ENCODE measurements at regions of chr11 and their contacts with region 1.

Region 1: DNA sequence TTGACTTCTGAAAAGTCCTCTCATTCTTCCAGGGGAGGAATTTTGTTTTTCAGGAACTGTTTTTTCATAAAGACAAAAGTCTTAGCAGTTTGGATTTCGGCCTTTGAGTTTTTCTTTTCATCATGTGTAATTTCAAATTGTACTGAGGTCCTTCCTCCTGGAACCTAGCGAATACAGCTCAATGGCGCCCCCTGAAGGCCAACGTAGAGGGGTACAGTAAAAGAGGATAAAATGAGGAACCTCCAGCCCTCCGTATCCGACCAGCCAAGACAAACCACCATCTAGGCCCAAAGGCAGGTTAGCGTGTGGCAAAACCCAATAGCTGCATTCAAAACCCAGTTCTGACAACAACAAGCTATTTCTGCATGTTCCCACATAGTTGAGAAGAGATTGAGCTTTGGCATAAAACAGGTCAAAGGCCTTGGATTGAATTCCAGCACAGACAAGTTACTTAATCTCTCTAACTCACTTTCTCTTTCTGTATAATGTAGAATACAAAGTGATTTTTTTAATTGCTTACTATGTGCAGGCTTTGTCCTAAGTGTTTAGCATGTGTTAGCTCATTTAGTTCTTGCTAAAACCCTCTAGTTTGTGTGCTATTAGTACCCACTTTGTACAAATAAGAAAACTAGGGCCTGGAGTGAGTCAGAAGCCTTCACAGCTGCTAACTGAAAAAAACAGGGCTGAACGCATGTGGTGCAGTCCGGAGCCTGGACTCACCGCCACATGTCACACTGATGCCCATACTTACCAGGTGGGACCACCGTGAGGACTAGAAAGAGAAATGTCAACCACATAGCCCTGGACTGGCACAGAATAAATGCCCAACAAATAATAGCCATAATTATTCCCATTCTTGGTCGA is 43.2 kb upstream of the ETS1 start:
- DNase-seq: peak; percentile 89
- ATAC-seq: peak; percentile 87
- H3K4me3 ChIP-seq: peak overlapping the region; percentile 15; the same call in 1 of the 2 replicates
- H3K27ac ChIP-seq: peak overlapping the region; percentile 64
- H3K4me1 ChIP-seq: peaks cover 51% of the 10 kb centered on the region
- H3K27me3 ChIP-seq: no peaks in the 10 kb centered on the region
- CTCF ChIP-seq: peak; percentile 80 to 97 (median 82)
- EP300 ChIP-seq: no peak
- POLR2A ChIP-seq: no peak
- RAD21 ChIP-seq: peak; percentile 98

Region 2: DNA sequence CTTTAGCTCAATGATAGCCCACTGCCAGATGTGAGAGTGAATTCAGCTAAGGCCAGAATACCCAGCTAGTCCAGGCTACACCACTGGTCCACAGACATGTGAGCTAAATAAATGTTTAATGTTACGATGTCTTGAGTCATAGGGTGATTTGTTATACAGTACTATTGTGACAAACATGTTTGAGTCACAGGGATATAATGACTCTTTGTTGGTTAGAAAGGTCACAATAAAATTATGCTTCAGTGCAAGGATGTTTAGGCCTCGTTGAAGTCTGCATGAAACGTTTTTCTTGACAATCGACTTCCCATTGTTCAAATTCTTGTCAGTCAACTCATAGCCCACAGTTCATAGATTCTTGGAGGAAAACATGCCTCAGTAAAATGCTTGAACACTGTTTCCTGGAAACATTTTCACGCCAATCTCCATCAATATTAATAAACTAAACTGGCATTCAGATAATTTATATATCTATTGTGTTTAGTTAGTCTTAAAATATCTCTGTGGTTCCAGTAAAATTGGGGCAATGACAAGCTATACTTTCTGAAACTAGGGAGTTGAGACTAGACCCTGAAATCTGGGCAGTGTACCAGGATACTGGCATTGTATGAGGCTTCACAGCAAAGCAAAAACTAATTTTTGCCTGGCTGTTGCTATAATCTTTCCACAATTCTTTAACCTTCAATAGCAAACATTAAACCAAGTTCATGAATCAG is 979.3 kb before region 1 on chr11:
- CTCF ChIA-PET with region 1: no interaction called
- POLR2A ChIA-PET with region 1: no interaction called
- RAD21 ChIA-PET with region 1: no interaction called
- SMC1A ChIA-PET with region 1: no interaction called
- in situ Hi-C with region 1: no loop called
- intact Hi-C with region 1: no loop called
- DNase-seq: no peak
- ATAC-seq: no peak
- H3K4me3 ChIP-seq: no peak overlapping the region
- H3K27ac ChIP-seq: no peak overlapping the region
- H3K4me1 ChIP-seq: no peaks in the 10 kb centered on the region
- H3K27me3 ChIP-seq: no peaks in the 10 kb centered on the region; a peak in 1 of 4 replicates
- CTCF ChIP-seq: no peak
- EP300 ChIP-seq: no peak
- POLR2A ChIP-seq: no peak
- RAD21 ChIP-seq: no peak

Region 3: DNA sequence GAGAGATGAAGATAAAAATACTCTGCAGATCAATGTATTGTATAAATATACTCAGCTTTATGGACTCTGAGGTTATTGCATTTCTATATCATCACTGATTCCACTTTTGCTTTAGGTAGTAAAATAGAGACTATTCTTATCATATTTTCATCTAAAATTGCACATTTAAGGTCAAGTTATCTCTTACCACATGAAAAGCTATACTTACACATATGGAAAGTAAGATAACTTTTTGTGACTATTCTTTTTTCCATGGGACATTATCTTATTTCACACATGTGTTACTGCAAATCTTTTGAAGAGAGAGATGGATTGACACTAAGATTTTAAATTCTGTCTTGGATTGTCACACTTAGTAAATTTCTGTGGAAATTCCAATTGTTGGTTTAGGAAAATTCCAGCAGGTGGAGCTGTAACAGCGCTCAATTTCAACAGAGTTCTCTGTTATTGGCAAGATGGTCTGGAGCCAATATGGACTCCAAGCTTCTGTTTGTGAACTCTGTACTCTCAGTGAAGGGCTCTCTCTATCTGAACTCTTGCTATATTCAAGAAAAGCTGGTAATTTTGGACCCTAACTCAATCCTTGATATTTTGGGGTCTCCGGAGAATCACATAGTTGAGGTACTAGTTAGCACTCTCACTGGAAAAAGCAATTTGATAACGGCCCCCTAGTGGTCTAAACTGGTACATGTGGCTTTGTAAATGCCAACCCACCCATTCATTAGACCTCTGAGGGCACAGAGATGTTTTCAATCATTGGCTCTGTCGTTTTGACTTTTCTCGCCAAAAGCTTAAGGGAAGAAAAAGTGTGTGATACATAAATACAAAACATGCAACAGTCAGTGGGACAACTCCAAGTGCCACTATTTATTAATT is 472.9 kb before region 1 on chr11:
- CTCF ChIA-PET with region 1: interaction called, 68 read pairs
- POLR2A ChIA-PET with region 1: no interaction called
- RAD21 ChIA-PET with region 1: interaction called, 25 read pairs
- SMC1A ChIA-PET with region 1: interaction called, 28 read pairs
- in situ Hi-C with region 1: no loop called
- intact Hi-C with region 1: loop called (anchors 1 kb)
- DNase-seq: peak; percentile 51
- ATAC-seq: peak; percentile 94
- H3K4me3 ChIP-seq: no peak overlapping the region
- H3K27ac ChIP-seq: no peak overlapping the region
- H3K4me1 ChIP-seq: no peaks in the 10 kb centered on the region
- H3K27me3 ChIP-seq: peaks cover 2 to 3% of the 10 kb centered on the region in 2 experiments; a peak in 2 of 4 replicates
- CTCF ChIP-seq: peak; percentile 58 to 92 (median 73)
- EP300 ChIP-seq: no peak
- POLR2A ChIP-seq: no peak
- RAD21 ChIP-seq: peak; percentile 61

Region 4: DNA sequence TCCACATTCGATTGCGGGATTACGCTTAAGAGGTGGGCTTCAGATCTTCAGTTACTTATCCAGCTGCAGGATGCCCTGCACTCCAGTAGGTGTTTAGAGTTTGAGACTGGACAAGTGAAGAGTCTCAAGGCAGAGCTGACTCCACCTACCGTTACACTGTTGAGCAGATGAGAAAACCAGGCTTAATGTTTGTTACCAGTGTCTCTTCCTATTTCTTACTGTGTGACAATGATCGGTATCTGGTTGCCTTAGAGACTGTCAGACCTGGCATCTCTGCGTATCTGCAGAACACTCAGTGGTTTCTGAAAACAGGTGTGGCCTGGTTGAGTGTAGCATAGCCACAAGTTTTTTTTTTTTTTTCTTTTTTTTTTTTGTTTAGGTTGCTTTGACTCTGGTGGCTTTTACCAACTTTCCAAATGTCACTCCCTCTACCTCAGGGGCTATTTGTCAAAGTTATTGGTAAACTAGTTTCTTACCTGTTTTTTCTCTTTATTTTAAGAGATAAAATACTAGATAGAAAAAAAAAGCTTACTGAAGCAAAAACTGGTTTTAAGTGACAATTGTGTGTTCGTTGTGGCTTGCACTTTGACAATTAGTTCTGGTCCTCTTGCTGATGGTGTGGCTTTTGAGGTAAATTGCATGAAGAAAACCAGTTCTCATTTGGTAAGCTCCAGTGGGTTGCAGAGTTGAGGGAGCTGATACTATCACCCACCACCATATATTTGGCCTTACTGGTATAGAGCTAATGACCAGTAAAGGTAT is 328.0 kb before region 1 on chr11:
- CTCF ChIA-PET with region 1: interaction called, 6 read pairs
- POLR2A ChIA-PET with region 1: interaction called, 5 read pairs
- RAD21 ChIA-PET with region 1: interaction called, 23 read pairs
- SMC1A ChIA-PET with region 1: interaction called, 16 read pairs
- in situ Hi-C with region 1: no loop called
- intact Hi-C with region 1: no loop called
- DNase-seq: peak; percentile 82
- ATAC-seq: peak; percentile 89
- H3K4me3 ChIP-seq: no peak overlapping the region
- H3K27ac ChIP-seq: peak overlapping the region; percentile 35; the same call in 1 of the 2 replicates
- H3K4me1 ChIP-seq: peaks cover 62% of the 10 kb centered on the region
- H3K27me3 ChIP-seq: no peaks in the 10 kb centered on the region
- CTCF ChIP-seq: 0 out of 6 replicates have a peak, but pooled peaks of 1 of the 3 experiments have one; percentile 11
- EP300 ChIP-seq: peak; percentile 6 to 8; a peak in 1 of 4 replicates
- POLR2A ChIP-seq: no peak
- RAD21 ChIP-seq: no peak

Region 5: GRCh38 chr11:128482512-128483191 is 147.9 kb before region 1 on chr11:
- CTCF ChIA-PET with region 1: interaction called, 27 read pairs
- POLR2A ChIA-PET with region 1: interaction called, 6 read pairs
- RAD21 ChIA-PET with region 1: interaction called, 27 read pairs
- SMC1A ChIA-PET with region 1: interaction called, 5 read pairs
- in situ Hi-C with region 1: no loop called
- intact Hi-C with region 1: no loop called
- DNase-seq: no peak
- ATAC-seq: peak; percentile 81
- H3K4me3 ChIP-seq: peak overlapping the region; percentile 37
- H3K27ac ChIP-seq: peak overlapping the region; percentile 97
- H3K4me1 ChIP-seq: peaks cover 42% of the 10 kb centered on the region
- H3K27me3 ChIP-seq: no peaks in the 10 kb centered on the region
- CTCF ChIP-seq: no peak
- EP300 ChIP-seq: peak in 1 of 2 experiments; percentile 44; a peak in 1 of 4 replicates
- POLR2A ChIP-seq: peak; percentile 64
- RAD21 ChIP-seq: 0 out of 2 replicates have a peak, but pooled peaks have one; percentile 1

Region 6: DNA sequence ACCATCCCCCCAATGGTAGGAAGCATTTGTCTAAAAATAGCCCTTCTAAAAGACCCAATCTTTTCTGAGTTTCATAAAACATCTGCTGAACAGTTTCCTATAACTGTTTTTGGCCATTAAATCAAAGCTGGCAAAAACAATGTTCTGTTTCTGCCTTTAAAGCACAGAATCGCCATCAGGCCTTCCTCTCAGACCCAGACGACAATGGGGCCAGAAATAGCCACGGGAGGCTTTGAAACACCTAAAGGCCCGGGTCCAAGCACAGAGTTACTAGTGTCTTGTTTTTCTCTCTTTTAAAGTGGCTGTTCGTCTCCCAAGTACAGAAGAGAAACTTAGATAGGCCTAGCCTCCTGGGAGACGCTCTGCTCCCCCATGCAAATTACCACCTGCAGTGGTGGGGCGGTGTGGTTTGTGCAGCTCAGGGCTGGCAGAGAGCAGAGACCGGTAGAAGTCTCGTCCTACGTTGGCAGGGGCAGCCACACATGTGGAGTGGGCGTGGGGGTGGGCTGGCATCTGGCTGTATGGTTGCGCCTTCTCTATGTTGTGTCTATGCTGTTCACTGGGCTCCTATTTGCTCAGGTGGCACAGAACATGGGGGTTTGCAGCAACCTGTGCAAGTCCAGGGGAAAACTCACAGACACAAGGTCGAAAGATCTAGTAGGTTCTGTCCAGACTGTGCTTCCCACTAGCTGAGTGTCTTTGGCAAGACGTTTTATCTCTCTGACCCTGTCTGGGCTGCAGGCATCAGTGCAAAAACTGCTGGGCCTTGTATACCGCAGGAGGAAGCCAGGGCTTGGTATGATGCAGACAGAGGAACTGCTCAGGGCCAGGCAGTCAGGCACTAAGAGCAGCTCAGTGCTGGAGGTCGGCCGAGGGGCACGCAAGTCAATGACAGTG is 19.6 kb before region 1 on chr11:
- CTCF ChIA-PET with region 1: interaction called, 444 read pairs
- POLR2A ChIA-PET with region 1: interaction called, 83 read pairs
- RAD21 ChIA-PET with region 1: interaction called, 273 read pairs
- SMC1A ChIA-PET with region 1: interaction called, 596 read pairs
- in situ Hi-C with region 1: no loop called
- intact Hi-C with region 1: loop called (anchors 1 kb)
- DNase-seq: peak; percentile 93
- ATAC-seq: peak; percentile 97
- H3K4me3 ChIP-seq: peak overlapping the region; percentile 55
- H3K27ac ChIP-seq: peak overlapping the region; percentile 98
- H3K4me1 ChIP-seq: peaks cover 36% of the 10 kb centered on the region
- H3K27me3 ChIP-seq: no peaks in the 10 kb centered on the region
- CTCF ChIP-seq: no peak
- EP300 ChIP-seq: peak; percentile 42 to 86; a peak in 3 of 4 replicates
- POLR2A ChIP-seq: peak; percentile 69
- RAD21 ChIP-seq: no peak; the same call in 1 of the 2 replicates

Region 7: DNA sequence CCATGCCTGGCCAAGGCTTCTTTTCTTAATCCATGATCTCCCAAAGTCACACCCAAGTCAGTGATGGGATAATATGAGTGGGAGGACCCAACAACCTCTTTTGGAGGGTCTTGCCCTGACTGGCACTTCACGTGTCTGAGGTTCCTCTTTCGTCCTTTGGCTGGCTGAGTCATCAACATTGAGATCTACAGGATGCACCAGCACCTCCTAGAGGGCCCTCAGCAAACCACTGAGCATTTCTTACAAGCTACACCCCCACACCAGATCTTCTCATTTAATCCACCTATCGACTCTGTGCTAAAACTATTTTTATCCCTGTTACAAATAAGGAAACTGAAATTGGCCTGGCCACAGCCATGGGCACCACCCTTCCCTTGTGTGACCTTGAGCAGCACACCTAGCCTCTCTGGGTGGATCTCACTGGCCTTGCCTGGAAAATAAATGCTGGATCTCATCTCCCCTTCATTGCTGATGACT is 126.7 kb after region 1 on chr11:
- CTCF ChIA-PET with region 1: interaction called, 187 read pairs
- POLR2A ChIA-PET with region 1: interaction called, 4 read pairs
- RAD21 ChIA-PET with region 1: interaction called, 103 read pairs
- SMC1A ChIA-PET with region 1: interaction called, 159 read pairs
- in situ Hi-C with region 1: loop called (anchors 5 kb)
- intact Hi-C with region 1: loop called (anchors 1 kb)
- DNase-seq: peak; percentile 93
- ATAC-seq: peak; percentile 89
- H3K4me3 ChIP-seq: no peak overlapping the region
- H3K27ac ChIP-seq: peak overlapping the region; percentile 87
- H3K4me1 ChIP-seq: peaks cover 31% of the 10 kb centered on the region
- H3K27me3 ChIP-seq: no peaks in the 10 kb centered on the region
- CTCF ChIP-seq: peak; percentile 81 to 94 (median 92)
- EP300 ChIP-seq: 0 out of 4 replicates have a peak, but pooled peaks of 1 of the 2 experiments have one; percentile 56
- POLR2A ChIP-seq: no peak
- RAD21 ChIP-seq: peak; percentile 90

Region 8: DNA sequence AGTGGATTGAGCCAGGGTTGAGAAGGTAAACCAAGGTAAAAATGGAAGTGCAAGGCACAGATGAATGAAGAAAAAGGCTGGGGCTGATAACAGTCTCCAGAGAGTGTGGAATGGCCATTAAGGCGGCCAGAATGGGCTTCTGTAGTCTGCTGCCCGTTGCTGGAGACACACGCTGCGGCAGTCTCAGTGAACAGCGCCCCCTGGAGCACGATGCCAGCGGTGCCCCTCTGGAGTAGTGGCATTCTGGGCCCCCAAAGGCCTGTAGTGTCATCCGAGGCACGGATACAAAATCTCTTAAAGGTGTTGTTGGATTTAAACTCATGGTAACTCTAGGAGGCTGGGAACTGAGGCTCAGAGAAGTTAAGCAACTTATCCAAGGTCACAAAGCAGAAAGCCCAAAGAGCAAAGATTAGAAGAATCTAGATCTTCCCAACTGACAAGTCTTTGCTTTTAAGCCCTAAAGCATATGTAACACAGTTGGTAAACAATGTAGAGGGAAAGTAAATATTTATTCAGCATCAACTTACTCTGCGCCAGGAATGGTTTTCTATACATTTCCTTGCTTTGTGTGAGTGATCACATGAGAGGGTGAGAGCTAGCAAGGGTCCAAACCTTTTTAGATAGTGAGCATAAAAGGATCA is 218.3 kb after region 1 on chr11:
- CTCF ChIA-PET with region 1: interaction called, 80 read pairs
- POLR2A ChIA-PET with region 1: interaction called, 3 read pairs
- RAD21 ChIA-PET with region 1: interaction called, 3 read pairs
- SMC1A ChIA-PET with region 1: interaction called, 5 read pairs
- in situ Hi-C with region 1: loop called (anchors 25 kb)
- intact Hi-C with region 1: loop called (anchors 5 kb)
- DNase-seq: no peak
- ATAC-seq: peak; percentile 100
- H3K4me3 ChIP-seq: no peak overlapping the region
- H3K27ac ChIP-seq: no peak overlapping the region
- H3K4me1 ChIP-seq: peaks cover 4% of the 10 kb centered on the region; the same call in 1 of the 2 replicates
- H3K27me3 ChIP-seq: no peaks in the 10 kb centered on the region
- CTCF ChIP-seq: peak; percentile 81 to 91 (median 88)
- EP300 ChIP-seq: no peak
- POLR2A ChIP-seq: no peak
- RAD21 ChIP-seq: peak; percentile 68

Measured in GM12878 (cell line).